ENCODE measurements at regions of chr5 and their contacts with region 1.

Region 1: GRCh38 chr5:159451197-159452052 is 121.1 kb upstream of the IL12B start:
- DNase-seq: peak in 1 of 2 donors; percentile 71
- ATAC-seq: peak; percentile 90 to 97 (median 95)
- H3K4me3 ChIP-seq: no peak overlapping the region
- H3K27ac ChIP-seq: peak overlapping the region; percentile 42 to 89 (median 73)
- H3K4me1 ChIP-seq: peaks cover 0 to 22% (median 14%) of the 10 kb centered on the region in 9 donors
- H3K27me3 ChIP-seq: peaks cover 0 to 6% (median 0%) of the 10 kb centered on the region in 7 donors
- CTCF ChIP-seq: no peak

Region 2: GRCh38 chr5:159504857-159505304 is 53.5 kb after region 1 on chr5:
- intact Hi-C with region 1: loop called in 7 of 10 experiments (anchors 1 to 5 kb)
- DNase-seq: peak; percentile 25 to 41
- ATAC-seq: peak; percentile 58 to 93 (median 73)
- H3K4me3 ChIP-seq: no peak overlapping the region
- H3K27ac ChIP-seq: peak overlapping the region; percentile 12 to 86 (median 74)
- H3K4me1 ChIP-seq: peaks cover 0 to 46% (median 23%) of the 10 kb centered on the region in 9 donors
- H3K27me3 ChIP-seq: no peaks in the 10 kb centered on the region
- CTCF ChIP-seq: no peak

Region 3: DNA sequence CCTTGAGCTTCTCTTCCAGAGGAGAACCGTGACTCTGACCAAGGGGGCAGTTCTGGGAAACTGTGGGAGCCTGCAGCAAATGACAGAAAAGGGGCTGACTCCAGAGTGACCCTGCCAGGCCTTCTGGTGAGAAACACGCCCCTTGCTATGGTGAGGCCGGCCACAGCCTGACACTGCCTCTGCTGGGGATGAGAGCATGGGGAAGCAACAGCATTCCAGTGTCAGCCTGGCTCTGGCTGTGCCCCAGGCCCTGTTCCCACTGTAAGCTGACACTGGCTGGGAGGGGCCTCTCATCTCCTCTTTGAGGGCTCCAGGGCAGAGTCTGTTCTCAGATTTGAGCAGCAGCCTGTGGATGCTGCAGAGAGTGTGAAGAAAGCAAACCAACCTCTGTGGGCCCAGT is 58.9 kb after region 1 on chr5:
- intact Hi-C with region 1: loop called in 7 of 10 experiments (anchors 1 to 5 kb)
- DNase-seq: peak; percentile 71 to 83
- ATAC-seq: peak; percentile 90 to 98 (median 94)
- H3K4me3 ChIP-seq: no peak overlapping the region
- H3K27ac ChIP-seq: peak overlapping the region; percentile 56 to 86 (median 80)
- H3K4me1 ChIP-seq: peaks cover 0 to 52% (median 21%) of the 10 kb centered on the region in 9 donors
- H3K27me3 ChIP-seq: no peaks in the 10 kb centered on the region
- CTCF ChIP-seq: peak in 2 of 9 donors; percentile 22 to 33

Region 4: GRCh38 chr5:159669559-159669958 is 218.1 kb after region 1 on chr5:
- intact Hi-C with region 1: no loop called
- DNase-seq: no peak
- ATAC-seq: no peak
- H3K4me3 ChIP-seq: no peak overlapping the region
- H3K27ac ChIP-seq: no peak overlapping the region
- H3K4me1 ChIP-seq: no peaks in the 10 kb centered on the region
- H3K27me3 ChIP-seq: no peaks in the 10 kb centered on the region
- CTCF ChIP-seq: no peak

Region 5: GRCh38 chr5:160165137-160166068 is 714.0 kb after region 1 on chr5:
- intact Hi-C with region 1: no loop called
- DNase-seq: peak; percentile 88 to 90
- ATAC-seq: peak; percentile 86 to 93 (median 89)
- H3K4me3 ChIP-seq: peak overlapping the region in 1 of 10 donors; percentile 9
- H3K27ac ChIP-seq: peak overlapping the region; percentile 46 to 87 (median 83)
- H3K4me1 ChIP-seq: peaks cover 8 to 44% (median 20%) of the 10 kb centered on the region in 9 donors
- H3K27me3 ChIP-seq: no peaks in the 10 kb centered on the region
- CTCF ChIP-seq: no peak